Posterior vena cava (tissue), 2 donors: ENCODE measurements at regions of chr11 and their contacts with region 1.

Region 1: GRCh38 chr11:83628622-83629355 is 342.6 kb upstream of the CCDC90B start:
- DNase-seq: no peak

Region 2: GRCh38 chr11:83175815-83176214 is 453.0 kb before region 1 on chr11:
- intact Hi-C with region 1: loop called in 1 of 2 experiments (anchors 5 kb)
- DNase-seq: no peak